Naive thymus-derived CD4-positive, alpha-beta T cell (primary cell): ENCODE measurements at regions of chr6 and their contacts with region 1.

Region 1: GRCh38 chr6:36123257-36124139 is 6.8 kb upstream of the MAPK13 start:
- DNase-seq: peak; percentile 74 to 96 (median 89)
- ATAC-seq: peak; percentile 83
- H3K4me3 ChIP-seq: peak overlapping the region; percentile 11
- H3K4me3 Mint-ChIP-seq: peak overlapping the region; percentile 36 to 99 (median 60)
- H3K27ac ChIP-seq: peak overlapping the region; percentile 90
- H3K27ac Mint-ChIP-seq: peak overlapping the region; percentile 94 to 100 (median 99)
- H3K4me1 ChIP-seq: peaks cover 64 to 75% of the 10 kb centered on the region in 2 donors
- H3K4me1 Mint-ChIP-seq: peaks cover 63 to 98% (median 87%) of the 10 kb centered on the region in 7 donors
- H3K27me3 ChIP-seq: no peaks in the 10 kb centered on the region
- H3K27me3 Mint-ChIP-seq: no peaks in the 10 kb centered on the region

Region 2: GRCh38 chr6:34392497-34393190 is 1730.9 kb before region 1 on chr6 and contains the start of gene NUDT3:
- CTCF ChIA-PET with region 1: no interaction called
- POLR2A ChIA-PET with region 1: no interaction called
- intact Hi-C with region 1: loop called in 1 of 2 experiments (anchors 5 kb)
- DNase-seq: peak; percentile 88 to 98 (median 93)
- ATAC-seq: peak; percentile 93
- H3K4me3 ChIP-seq: peak within 1 kb of the TSS; percentile 92
- H3K4me3 Mint-ChIP-seq: peak within 1 kb of the TSS in 4 of 10 donors; percentile 79 to 99 (median 98)
- H3K27ac ChIP-seq: peak within 1 kb of the TSS; percentile 85
- H3K27ac Mint-ChIP-seq: peak within 1 kb of the TSS in 8 of 9 donors; percentile 89 to 95 (median 92)
- H3K4me1 ChIP-seq: peaks cover 11 to 16% of the 10 kb centered on the region in 2 donors
- H3K4me1 Mint-ChIP-seq: peaks cover 0 to 28% (median 23%) of the 10 kb centered on the region in 7 donors
- H3K27me3 ChIP-seq: no peaks in the 10 kb centered on the region
- H3K27me3 Mint-ChIP-seq: peaks cover 0 to 2% (median 0%) of the 10 kb centered on the region in 5 donors
- total RNA-seq, gene NUDT3: 16.2 to 29.7 (median 25.4) TPM

Region 3: GRCh38 chr6:35920793-35921732 is 202.4 kb before region 1 on chr6 and contains the start of gene SRPK1:
- CTCF ChIA-PET with region 1: no interaction called
- POLR2A ChIA-PET with region 1: interaction called, 4 read pairs
- intact Hi-C with region 1: loop called (anchors 5 to 10 kb)
- DNase-seq: peak; percentile 58 to 92 (median 73)
- ATAC-seq: peak; percentile 87
- H3K4me3 ChIP-seq: peak within 1 kb of the TSS; percentile 98
- H3K4me3 Mint-ChIP-seq: peak within 1 kb of the TSS; percentile 87 to 100 (median 94)
- H3K27ac ChIP-seq: peak within 1 kb of the TSS; percentile 76
- H3K27ac Mint-ChIP-seq: peak within 1 kb of the TSS; percentile 81 to 98 (median 94)
- H3K4me1 ChIP-seq: peaks cover 12 to 28% of the 10 kb centered on the region in 2 donors
- H3K4me1 Mint-ChIP-seq: peaks cover 18 to 49% (median 41%) of the 10 kb centered on the region in 7 donors
- H3K27me3 ChIP-seq: no peaks in the 10 kb centered on the region
- H3K27me3 Mint-ChIP-seq: no peaks in the 10 kb centered on the region
- total RNA-seq, gene SRPK1: 29.1 to 80.9 (median 42.1) TPM

Region 4: GRCh38 chr6:36099872-36100483 is 23.5 kb before region 1 on chr6:
- CTCF ChIA-PET with region 1: interaction called, 53 read pairs
- POLR2A ChIA-PET with region 1: interaction called, 19 read pairs
- intact Hi-C with region 1: loop called in 1 of 2 experiments (anchors 1 kb)
- DNase-seq: peak in 7 of 9 donors; percentile 63 to 81 (median 74)
- ATAC-seq: peak; percentile 89
- H3K4me3 ChIP-seq: peak overlapping the region; percentile 6
- H3K4me3 Mint-ChIP-seq: peak overlapping the region in 9 of 10 donors; percentile 56 to 85 (median 73)
- H3K27ac ChIP-seq: peak overlapping the region; percentile 52
- H3K27ac Mint-ChIP-seq: peak overlapping the region in 8 of 9 donors; percentile 87 to 97 (median 92)
- H3K4me1 ChIP-seq: peaks cover 32 to 35% of the 10 kb centered on the region in 2 donors
- H3K4me1 Mint-ChIP-seq: peaks cover 29 to 73% (median 66%) of the 10 kb centered on the region in 7 donors
- H3K27me3 ChIP-seq: no peaks in the 10 kb centered on the region
- H3K27me3 Mint-ChIP-seq: no peaks in the 10 kb centered on the region

Region 5: GRCh38 chr6:36109092-36109491 is 14.4 kb before region 1 on chr6:
- CTCF ChIA-PET with region 1: interaction called, 8 read pairs
- POLR2A ChIA-PET with region 1: interaction called, 28 read pairs
- intact Hi-C with region 1: loop called in 1 of 2 experiments (anchors 1 kb)
- DNase-seq: peak in 7 of 9 donors; percentile 70 to 90 (median 84)
- ATAC-seq: peak; percentile 95
- H3K4me3 ChIP-seq: no peak overlapping the region
- H3K4me3 Mint-ChIP-seq: peak overlapping the region; percentile 34 to 67 (median 51)
- H3K27ac ChIP-seq: peak overlapping the region; percentile 69
- H3K27ac Mint-ChIP-seq: peak overlapping the region; percentile 75 to 98 (median 96)
- H3K4me1 ChIP-seq: peaks cover 27 to 46% of the 10 kb centered on the region in 2 donors
- H3K4me1 Mint-ChIP-seq: peaks cover 27 to 78% (median 54%) of the 10 kb centered on the region in 7 donors
- H3K27me3 ChIP-seq: no peaks in the 10 kb centered on the region
- H3K27me3 Mint-ChIP-seq: no peaks in the 10 kb centered on the region

Region 6: GRCh38 chr6:36302227-36302976 is 178.9 kb after region 1 on chr6:
- CTCF ChIA-PET with region 1: interaction called, 6 read pairs
- POLR2A ChIA-PET with region 1: interaction called, 5 read pairs
- intact Hi-C with region 1: loop called (anchors 1 kb)
- DNase-seq: peak; percentile 74 to 92 (median 88)
- ATAC-seq: peak; percentile 100
- H3K4me3 ChIP-seq: no peak overlapping the region
- H3K4me3 Mint-ChIP-seq: no peak overlapping the region
- H3K27ac ChIP-seq: no peak overlapping the region
- H3K27ac Mint-ChIP-seq: peak overlapping the region in 4 of 9 donors; percentile 29 to 59 (median 48)
- H3K4me1 ChIP-seq: no peaks in the 10 kb centered on the region
- H3K4me1 Mint-ChIP-seq: peaks cover 0 to 8% (median 6%) of the 10 kb centered on the region in 7 donors
- H3K27me3 ChIP-seq: no peaks in the 10 kb centered on the region
- H3K27me3 Mint-ChIP-seq: peaks cover 0 to 29% (median 5%) of the 10 kb centered on the region in 5 donors

Region 7: GRCh38 chr6:36360241-36361054 is 236.9 kb after region 1 on chr6:
- CTCF ChIA-PET with region 1: no interaction called
- POLR2A ChIA-PET with region 1: no interaction called
- intact Hi-C with region 1: loop called (anchors 1 to 2 kb)
- DNase-seq: peak; percentile 37 to 74 (median 66)
- ATAC-seq: peak; percentile 95
- H3K4me3 ChIP-seq: no peak overlapping the region
- H3K4me3 Mint-ChIP-seq: no peak overlapping the region
- H3K27ac ChIP-seq: no peak overlapping the region
- H3K27ac Mint-ChIP-seq: peak overlapping the region in 2 of 9 donors; percentile 24 to 55
- H3K4me1 ChIP-seq: peaks cover 4 to 6% of the 10 kb centered on the region in 2 donors
- H3K4me1 Mint-ChIP-seq: peaks cover 0 to 30% (median 4%) of the 10 kb centered on the region in 7 donors
- H3K27me3 ChIP-seq: no peaks in the 10 kb centered on the region
- H3K27me3 Mint-ChIP-seq: peaks cover 0 to 15% (median 4%) of the 10 kb centered on the region in 5 donors

Region 8: DNA sequence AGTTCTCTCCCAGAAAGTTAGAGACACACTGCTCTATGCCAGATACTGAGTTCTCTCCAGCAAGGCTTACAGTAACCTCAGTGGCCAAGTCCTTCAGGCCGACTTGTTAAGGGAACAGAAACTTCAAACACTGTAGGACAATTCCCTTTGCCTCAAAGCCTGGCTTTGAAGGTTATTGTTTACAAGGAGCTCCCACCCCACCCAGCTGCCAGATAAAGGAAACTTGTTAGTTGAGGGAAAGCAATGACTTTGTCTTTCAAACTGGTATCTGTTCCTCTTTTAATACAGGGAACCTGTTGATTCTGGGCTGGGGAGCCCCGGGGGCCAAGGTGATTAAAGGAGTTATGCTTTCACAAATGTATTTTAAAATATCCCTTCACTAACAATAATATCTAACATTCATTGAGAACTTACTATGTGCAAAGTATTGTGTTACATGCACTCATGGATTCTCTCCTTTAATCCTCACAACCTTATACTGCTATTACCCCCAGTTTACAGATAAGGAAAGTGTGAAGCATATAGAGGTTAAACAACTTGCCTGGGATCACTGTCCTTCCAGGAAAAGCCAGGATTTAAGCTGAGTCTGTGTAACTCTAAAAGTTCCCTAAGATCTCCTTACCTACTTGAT is 527.5 kb after region 1 on chr6:
- CTCF ChIA-PET with region 1: no interaction called
- POLR2A ChIA-PET with region 1: no interaction called
- intact Hi-C with region 1: no loop called
- DNase-seq: no peak
- ATAC-seq: peak; percentile 52
- H3K4me3 ChIP-seq: no peak overlapping the region
- H3K4me3 Mint-ChIP-seq: no peak overlapping the region
- H3K27ac ChIP-seq: no peak overlapping the region
- H3K27ac Mint-ChIP-seq: no peak overlapping the region
- H3K4me1 ChIP-seq: no peaks in the 10 kb centered on the region
- H3K4me1 Mint-ChIP-seq: peaks cover 0 to 12% (median 0%) of the 10 kb centered on the region in 7 donors
- H3K27me3 ChIP-seq: no peaks in the 10 kb centered on the region
- H3K27me3 Mint-ChIP-seq: peaks cover 4 to 63% (median 10%) of the 10 kb centered on the region in 5 donors